Right ventricle myocardium superior (tissue), 1 donor: ENCODE measurements at regions of chr4 and their contacts with region 1.

Region 1: DNA sequence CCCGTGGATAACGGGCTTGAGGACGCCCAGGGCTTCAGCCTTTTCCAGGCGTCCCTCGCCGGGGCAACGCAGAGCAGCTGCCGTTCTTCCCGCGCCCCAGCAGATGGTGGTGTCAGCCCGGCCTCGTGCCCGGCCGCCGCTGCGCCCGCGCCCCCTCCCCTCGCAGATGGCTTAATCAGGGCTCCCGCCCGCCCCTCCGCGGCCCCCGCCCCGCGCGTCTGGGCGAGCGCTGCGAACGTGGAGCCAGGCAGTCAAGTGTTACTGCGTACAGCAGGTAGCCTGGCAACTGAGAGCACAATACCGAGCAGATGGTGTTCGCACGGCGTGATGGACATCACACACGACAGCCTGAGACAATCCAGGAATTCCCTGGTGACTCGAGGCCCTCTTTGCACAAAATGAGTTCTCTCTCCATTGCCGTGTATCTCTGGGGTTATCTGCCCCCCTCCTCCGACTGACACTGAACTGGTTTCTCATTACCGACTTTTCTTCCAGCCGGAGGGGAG is 69.3 kb downstream of the MGST2 start:
- DNase-seq: peak; percentile 93
- ATAC-seq: peak; percentile 96

Region 2: GRCh38 chr4:139761461-139761860 is 26.5 kb after region 1 on chr4:
- intact Hi-C with region 1: loop called (anchors 1 kb)
- DNase-seq: no peak
- ATAC-seq: no peak

Region 3: GRCh38 chr4:139783741-139784484 is 49.0 kb after region 1 on chr4:
- intact Hi-C with region 1: no loop called
- DNase-seq: no peak
- ATAC-seq: no peak

Region 4: DNA sequence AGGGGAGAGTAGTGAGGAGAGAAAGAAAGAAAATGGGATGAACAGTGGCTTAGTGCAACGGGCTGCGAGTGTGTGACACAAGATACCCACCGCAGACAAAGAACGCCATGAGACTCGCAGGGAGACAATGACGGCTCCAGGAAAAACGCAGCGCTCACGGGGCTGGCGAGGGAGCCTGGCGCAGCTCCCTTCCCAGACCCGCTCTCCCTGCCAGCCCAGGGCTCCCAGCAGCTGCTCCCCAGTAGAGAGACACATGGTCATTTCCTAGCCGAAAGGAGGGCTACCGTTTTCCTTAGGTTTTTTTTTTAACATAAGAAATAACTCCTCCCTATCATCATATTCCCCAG is 269.6 kb after region 1 on chr4:
- intact Hi-C with region 1: loop called (anchors 10 kb)
- DNase-seq: peak; percentile 69
- ATAC-seq: peak; percentile 95